Breast epithelium (tissue), 4 donors: ENCODE measurements at regions of chr7 and their contacts with region 1.

Region 1: DNA sequence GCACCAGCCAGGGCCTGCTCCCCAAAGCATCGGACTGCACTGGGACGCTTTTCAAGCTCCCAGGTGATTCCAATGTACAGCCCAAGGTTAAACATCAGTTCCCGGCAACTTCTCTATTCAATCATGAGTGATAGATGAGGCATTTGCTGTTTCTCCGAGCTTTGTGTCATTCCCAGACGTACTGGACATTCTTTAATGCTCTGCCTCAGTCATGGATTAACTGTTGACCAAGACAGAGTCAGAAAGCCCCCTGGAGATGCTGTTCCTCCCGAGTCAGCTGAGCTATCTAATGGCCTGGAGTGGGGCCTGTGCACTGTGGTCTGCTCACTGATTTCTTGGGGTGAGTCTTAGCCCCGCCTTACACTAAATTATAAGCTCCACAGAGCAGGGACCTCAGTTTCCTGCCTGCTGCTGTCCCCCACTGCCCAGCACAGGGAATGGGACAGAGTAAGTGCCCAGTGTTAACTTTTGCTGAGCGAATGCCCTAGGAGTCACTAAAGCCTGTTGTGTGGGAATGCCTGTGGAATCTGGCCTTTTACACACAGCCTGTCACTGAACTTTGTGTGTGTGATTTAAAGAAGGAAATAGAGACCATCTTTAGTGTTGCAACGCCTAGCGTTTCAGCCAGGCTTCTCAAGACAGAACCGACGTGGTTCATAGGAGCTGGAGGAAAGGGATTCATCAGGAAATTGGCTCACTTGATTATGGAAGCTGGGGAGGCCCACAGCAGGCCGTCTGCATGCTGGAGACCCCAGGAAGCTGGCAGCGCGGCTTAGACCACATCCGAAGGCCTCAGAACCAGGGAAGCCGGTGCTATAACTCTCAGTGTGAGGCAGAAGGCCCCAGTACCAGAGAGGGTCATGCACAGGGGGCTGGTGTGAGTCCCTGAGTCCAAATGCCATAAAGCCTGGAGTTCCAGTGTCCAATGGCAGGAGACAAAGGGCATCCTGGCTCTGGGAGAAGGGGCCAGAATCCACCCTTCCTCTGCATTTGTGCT is 29.3 kb upstream of the RNF32 start:
- DNase-seq: no peak
- H3K4me3 ChIP-seq: no peak overlapping the region
- H3K27ac ChIP-seq: no peak overlapping the region
- H3K4me1 ChIP-seq: no peaks in the 10 kb centered on the region
- H3K27me3 ChIP-seq: peaks cover 0 to 3% of the 10 kb centered on the region in 2 donors
- CTCF ChIP-seq: no peak
- POLR2A ChIP-seq: no peak

Region 2: DNA sequence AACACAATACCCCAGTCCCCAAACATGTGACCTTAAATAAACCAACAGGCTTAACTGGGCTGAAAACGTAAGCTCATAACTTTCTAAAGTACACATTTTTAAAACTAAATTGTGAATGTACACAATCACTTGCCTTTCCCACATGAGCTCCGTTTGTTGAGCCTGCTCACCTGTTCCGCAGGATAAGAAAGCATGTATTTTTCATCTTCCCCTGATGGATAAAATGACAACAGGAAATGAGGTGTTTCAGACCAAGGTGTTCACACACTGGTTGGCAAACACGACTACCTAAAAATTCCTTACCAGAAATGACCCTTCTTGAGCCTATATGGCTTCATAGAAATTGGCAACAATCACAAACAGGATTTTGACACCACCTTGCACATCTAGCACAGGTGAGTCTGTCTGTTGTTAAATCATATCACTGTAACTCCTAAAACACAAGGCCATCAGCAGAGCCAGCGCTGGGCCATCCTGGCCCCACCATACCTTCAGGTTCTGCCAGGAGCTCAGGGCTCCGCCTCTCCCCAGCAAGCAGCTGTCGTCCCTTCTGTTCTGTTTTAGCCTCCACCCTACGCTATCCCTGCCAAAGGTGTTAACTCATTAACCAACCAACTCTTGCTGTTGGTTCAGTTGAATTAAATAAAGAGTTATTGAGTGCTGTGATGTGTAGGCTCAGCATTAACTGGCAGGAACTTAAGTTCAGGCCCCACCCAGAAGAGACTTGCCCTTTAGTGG is 44.3 kb before region 1 on chr7:
- intact Hi-C with region 1: loop called (anchors 1 kb)
- DNase-seq: no peak
- H3K4me3 ChIP-seq: no peak overlapping the region
- H3K27ac ChIP-seq: no peak overlapping the region
- H3K4me1 ChIP-seq: no peaks in the 10 kb centered on the region
- H3K27me3 ChIP-seq: no peaks in the 10 kb centered on the region
- CTCF ChIP-seq: no peak
- POLR2A ChIP-seq: no peak